MCF 10A (cell line): ENCODE measurements at regions of chr17 and their contacts with region 1.

Region 1: GRCh38 chr17:40854159-40854814 is 12.7 kb downstream of the KRT12 start:
- DNase-seq: peak; percentile 87
- H3K4me3 Mint-ChIP-seq: no peak overlapping the region
- H3K27ac Mint-ChIP-seq: peak overlapping the region; percentile 95
- H3K4me1 Mint-ChIP-seq: peaks cover 38% of the 10 kb centered on the region
- H3K27me3 Mint-ChIP-seq: no peaks in the 10 kb centered on the region
- CTCF ChIP-seq: no peak

Region 2: GRCh38 chr17:40810505-40810904 is 43.8 kb before region 1 on chr17:
- CTCF ChIA-PET with region 1: interaction called, 5 read pairs
- POLR2A ChIA-PET with region 1: interaction called, 235 read pairs
- intact Hi-C with region 1: no loop called
- DNase-seq: peak; percentile 90
- H3K4me3 Mint-ChIP-seq: peak overlapping the region; percentile 58
- H3K27ac Mint-ChIP-seq: peak overlapping the region; percentile 70
- H3K4me1 Mint-ChIP-seq: peaks cover 22% of the 10 kb centered on the region
- H3K27me3 Mint-ChIP-seq: no peaks in the 10 kb centered on the region
- CTCF ChIP-seq: no peak

Region 3: DNA sequence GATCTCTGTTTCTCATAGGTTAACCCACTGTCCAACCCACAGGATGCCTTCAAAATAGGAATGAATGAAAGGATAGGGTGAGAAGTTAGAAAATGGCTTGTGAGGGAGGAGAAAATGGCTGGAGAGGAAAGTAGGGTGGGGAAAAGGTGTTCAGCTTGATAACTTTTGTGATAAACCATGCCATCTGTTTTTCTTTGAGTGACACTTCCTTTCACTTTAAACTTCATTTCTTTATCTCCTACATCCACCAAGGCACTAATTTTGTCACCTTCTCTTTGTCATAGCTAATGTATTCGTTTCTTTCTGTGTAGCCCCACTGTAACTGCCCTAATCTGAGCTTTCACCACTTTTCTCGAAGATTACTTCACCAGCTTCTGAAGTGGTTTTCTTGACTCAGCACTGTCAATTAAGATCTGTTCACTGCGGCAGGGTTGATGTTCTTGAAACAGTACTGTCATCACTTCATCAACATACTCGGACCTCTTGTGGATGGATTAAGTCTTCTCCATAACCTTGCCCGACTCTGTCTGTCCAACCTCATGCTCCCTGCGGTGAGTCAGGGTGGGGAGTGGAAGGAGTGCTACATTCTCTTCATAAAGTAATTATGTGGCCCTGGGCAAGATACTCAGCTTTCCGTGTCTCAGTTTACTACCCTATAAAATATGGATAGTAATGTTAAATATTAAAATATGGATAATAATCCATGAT is 26.4 kb before region 1 on chr17:
- CTCF ChIA-PET with region 1: interaction called, 4 read pairs
- POLR2A ChIA-PET with region 1: interaction called, 352 read pairs
- intact Hi-C with region 1: no loop called
- DNase-seq: peak; percentile 89
- H3K4me3 Mint-ChIP-seq: peak overlapping the region; percentile 64
- H3K27ac Mint-ChIP-seq: peak overlapping the region; percentile 94
- H3K4me1 Mint-ChIP-seq: peaks cover 41% of the 10 kb centered on the region
- H3K27me3 Mint-ChIP-seq: no peaks in the 10 kb centered on the region
- CTCF ChIP-seq: no peak

Region 4: GRCh38 chr17:40841246-40841645 is 13.0 kb before region 1 on chr17:
- CTCF ChIA-PET with region 1: no interaction called
- POLR2A ChIA-PET with region 1: interaction called, 18 read pairs
- intact Hi-C with region 1: no loop called
- DNase-seq: no peak
- H3K4me3 Mint-ChIP-seq: no peak overlapping the region
- H3K27ac Mint-ChIP-seq: peak overlapping the region; percentile 12
- H3K4me1 Mint-ChIP-seq: peaks cover 4% of the 10 kb centered on the region
- H3K27me3 Mint-ChIP-seq: no peaks in the 10 kb centered on the region
- CTCF ChIP-seq: no peak

Region 5: DNA sequence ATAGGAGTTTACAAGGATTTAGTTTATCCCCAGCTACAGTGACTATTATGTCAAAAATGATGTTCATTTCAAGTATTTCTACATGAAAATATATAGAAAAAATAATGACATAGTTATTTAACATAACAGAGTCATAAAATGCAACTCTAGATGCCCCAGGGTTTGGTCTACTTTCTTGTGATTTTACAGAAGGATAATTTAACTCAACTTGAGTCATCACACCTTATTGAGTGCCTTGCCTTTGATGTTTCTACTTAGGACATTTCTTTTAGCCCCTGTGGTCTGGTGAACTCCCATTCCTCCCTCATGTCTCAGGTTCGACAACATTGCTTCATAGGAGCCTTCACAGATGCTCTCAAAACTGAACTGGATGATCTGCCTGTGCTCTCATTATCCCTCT is 28.7 kb after region 1 on chr17:
- CTCF ChIA-PET with region 1: no interaction called
- POLR2A ChIA-PET with region 1: no interaction called
- intact Hi-C with region 1: no loop called
- DNase-seq: no peak
- H3K4me3 Mint-ChIP-seq: no peak overlapping the region
- H3K27ac Mint-ChIP-seq: no peak overlapping the region
- H3K4me1 Mint-ChIP-seq: no peaks in the 10 kb centered on the region
- H3K27me3 Mint-ChIP-seq: peaks cover under 1% of the 10 kb centered on the region
- CTCF ChIP-seq: no peak

Region 6: DNA sequence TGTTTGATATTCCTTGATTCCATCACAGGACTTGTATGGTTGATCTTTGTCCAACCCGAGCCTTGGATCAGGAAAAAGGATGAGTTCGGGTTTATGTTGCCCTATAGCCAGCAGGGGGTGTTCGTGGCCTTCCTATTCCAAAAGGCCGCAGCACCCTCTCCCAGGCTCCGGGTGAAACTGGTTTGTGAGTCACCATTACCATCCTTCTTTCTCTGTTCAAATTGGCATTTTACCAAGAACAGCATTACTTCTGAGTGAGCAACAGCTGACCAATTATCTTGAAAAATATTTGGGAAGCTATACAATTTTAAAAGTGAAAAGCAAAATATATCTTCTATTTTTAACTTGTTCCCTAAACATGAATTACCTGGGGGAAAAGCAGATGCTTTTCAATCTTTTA is 55.1 kb after region 1 on chr17:
- CTCF ChIA-PET with region 1: interaction called, 6 read pairs
- POLR2A ChIA-PET with region 1: interaction called, 18 read pairs
- intact Hi-C with region 1: loop called (anchors 2 kb)
- DNase-seq: peak; percentile 96
- H3K4me3 Mint-ChIP-seq: peak overlapping the region; percentile 61
- H3K27ac Mint-ChIP-seq: peak overlapping the region; percentile 91
- H3K4me1 Mint-ChIP-seq: peaks cover 16% of the 10 kb centered on the region
- H3K27me3 Mint-ChIP-seq: no peaks in the 10 kb centered on the region
- CTCF ChIP-seq: peak; percentile 71

Region 7: DNA sequence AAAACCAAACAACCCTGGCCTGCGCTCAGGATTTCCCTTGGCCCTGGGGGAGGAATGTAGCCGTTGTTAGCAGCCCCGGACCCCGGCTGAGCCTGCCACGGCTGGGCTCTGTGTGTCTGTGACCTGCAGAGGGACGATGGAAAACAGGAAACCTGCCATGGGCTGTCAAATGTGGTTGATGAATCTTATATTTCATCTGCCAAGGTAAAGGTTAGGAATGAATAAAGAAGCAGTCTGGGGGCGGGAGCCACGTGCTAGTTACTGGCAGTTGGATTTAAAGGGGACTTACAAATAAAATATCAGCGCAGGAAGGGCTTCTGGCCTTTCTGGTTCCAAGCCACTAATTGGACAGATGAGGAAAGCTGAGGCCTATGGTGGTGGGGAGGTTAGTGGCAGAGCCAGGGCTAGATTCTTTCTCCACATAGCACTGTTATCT is 83.1 kb after region 1 on chr17 and contains the start of gene KRT23:
- CTCF ChIA-PET with region 1: no interaction called
- POLR2A ChIA-PET with region 1: no interaction called
- intact Hi-C with region 1: no loop called
- DNase-seq: peak; percentile 36
- H3K4me3 Mint-ChIP-seq: no peak within 1 kb of the TSS
- H3K27ac Mint-ChIP-seq: no peak within 1 kb of the TSS
- H3K4me1 Mint-ChIP-seq: peaks cover 14% of the 10 kb centered on the region
- H3K27me3 Mint-ChIP-seq: peaks cover 4% of the 10 kb centered on the region
- CTCF ChIP-seq: no peak
- total RNA-seq, gene KRT23: not detected in 2 replicates

Region 8: GRCh38 chr17:41131979-41132378 is 277.7 kb after region 1 on chr17:
- CTCF ChIA-PET with region 1: no interaction called
- POLR2A ChIA-PET with region 1: no interaction called
- intact Hi-C with region 1: no loop called
- DNase-seq: peak; percentile 6
- H3K4me3 Mint-ChIP-seq: no peak overlapping the region
- H3K27ac Mint-ChIP-seq: no peak overlapping the region
- H3K4me1 Mint-ChIP-seq: peaks cover 9% of the 10 kb centered on the region
- H3K27me3 Mint-ChIP-seq: no peaks in the 10 kb centered on the region
- CTCF ChIP-seq: no peak

Region 9: GRCh38 chr17:41329281-41329948 is 475.1 kb after region 1 on chr17:
- CTCF ChIA-PET with region 1: interaction called, 6 read pairs
- POLR2A ChIA-PET with region 1: interaction called, 3 read pairs
- intact Hi-C with region 1: loop called (anchors 2 kb)
- DNase-seq: peak; percentile 62
- H3K4me3 Mint-ChIP-seq: no peak overlapping the region
- H3K27ac Mint-ChIP-seq: no peak overlapping the region
- H3K4me1 Mint-ChIP-seq: no peaks in the 10 kb centered on the region
- H3K27me3 Mint-ChIP-seq: no peaks in the 10 kb centered on the region
- CTCF ChIP-seq: peak; percentile 69

Region 10: DNA sequence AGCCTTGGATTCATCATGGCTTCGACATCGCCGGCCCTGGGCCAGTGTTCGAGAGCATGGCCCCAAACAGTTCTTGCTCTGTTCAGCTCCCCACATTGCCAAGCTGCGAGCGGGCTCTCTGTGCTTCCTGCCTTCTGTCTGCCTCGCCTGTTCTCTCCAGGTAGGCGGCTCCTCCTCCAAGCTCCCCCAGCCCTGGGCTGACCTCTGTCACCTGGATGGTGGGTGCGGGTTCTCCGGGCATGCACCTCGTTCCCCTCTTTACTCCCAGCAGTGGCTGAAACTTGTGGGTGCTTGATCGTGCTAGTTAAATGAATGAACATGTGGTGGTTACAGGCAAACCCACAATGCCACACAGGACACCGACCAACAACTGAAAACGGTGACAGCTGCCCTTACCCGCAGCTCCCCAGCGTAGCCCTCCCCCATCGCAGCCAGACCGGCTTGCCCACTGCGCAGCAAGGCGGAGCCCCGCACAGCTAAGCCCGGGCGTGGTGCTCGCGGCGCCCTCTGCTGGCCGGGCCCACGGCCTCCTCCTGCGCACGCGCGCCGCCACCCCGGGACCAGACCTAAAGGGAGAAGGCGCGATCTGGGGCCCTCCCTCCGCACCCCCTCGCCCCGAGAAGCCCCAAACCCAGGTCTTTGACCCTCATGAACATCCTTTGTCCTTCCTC is 811.4 kb after region 1 on chr17:
- CTCF ChIA-PET with region 1: interaction called, 35 read pairs
- POLR2A ChIA-PET with region 1: interaction called, 4 read pairs
- intact Hi-C with region 1: loop called (anchors 2 kb)
- DNase-seq: peak; percentile 78
- H3K4me3 Mint-ChIP-seq: peak overlapping the region; percentile 70
- H3K27ac Mint-ChIP-seq: peak overlapping the region; percentile 66
- H3K4me1 Mint-ChIP-seq: peaks cover 28% of the 10 kb centered on the region
- H3K27me3 Mint-ChIP-seq: no peaks in the 10 kb centered on the region
- CTCF ChIP-seq: peak; percentile 95